ENCODE measurements at regions of chr6 and their contacts with region 1.

Region 1: GRCh38 chr6:125956506-125957390 is at the start of gene HINT3:
- DNase-seq: peak; percentile 99
- ATAC-seq: peak; percentile 97
- total RNA-seq, gene HINT3: 40.8 TPM

Region 2: DNA sequence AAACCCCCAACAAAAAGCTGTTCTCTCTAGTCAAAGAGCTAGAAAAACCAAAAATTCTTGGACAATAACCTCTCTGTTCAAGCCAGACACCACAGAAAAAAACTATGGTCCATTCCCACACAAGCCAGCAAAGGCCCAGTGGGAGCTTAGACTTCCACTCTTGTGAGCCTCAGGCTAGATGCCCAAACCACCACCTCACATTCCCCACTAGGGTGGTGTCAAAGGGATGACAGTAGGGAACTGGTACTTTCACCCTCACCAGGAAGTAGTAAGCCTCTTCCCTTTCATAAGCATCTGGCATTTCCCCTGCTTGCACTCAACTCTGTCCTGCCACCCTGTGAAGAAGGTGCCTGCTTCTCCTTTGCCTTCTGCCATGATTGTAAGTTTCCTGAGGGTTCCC is 1053.0 kb before region 1 on chr6:
- intact Hi-C with region 1: no loop called
- DNase-seq: no peak
- ATAC-seq: no peak

Region 3: DNA sequence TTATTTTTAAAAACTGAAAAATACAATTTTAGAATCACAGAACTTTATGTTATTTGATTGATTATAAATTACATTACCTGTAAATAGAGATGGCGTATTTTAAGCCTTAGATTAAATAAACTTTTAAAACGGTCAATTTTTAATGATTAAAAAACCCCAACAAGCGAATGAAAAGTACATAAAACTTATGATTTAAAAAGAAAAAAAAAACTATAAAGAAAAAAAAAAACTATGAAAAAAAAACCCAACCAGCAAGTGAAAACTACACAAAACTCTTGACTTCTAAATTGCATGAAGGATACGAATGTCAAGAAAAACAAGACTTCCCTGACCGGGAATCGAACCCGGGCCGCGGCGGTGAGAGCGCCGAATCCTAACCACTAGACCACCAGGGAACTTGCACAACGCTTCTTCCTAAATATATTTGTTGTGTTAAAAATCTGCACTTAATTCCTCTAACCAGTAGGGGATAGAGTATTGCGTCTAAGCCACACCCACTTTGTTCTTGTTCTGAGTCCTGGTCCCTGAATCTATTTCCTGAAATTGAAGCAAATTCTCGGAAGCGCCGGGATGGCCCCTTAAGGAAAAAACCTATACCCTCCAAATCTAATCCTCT is 176.7 kb before region 1 on chr6:
- intact Hi-C with region 1: loop called (anchors 5 kb)
- DNase-seq: peak; percentile 84
- ATAC-seq: peak; percentile 96

Region 4: GRCh38 chr6:126107475-126108166 is 150.9 kb after region 1 on chr6:
- intact Hi-C with region 1: no loop called
- DNase-seq: no peak
- ATAC-seq: no peak